ENCODE measurements at regions of chr2 and their contacts with region 1.

Region 1: GRCh38 chr2:54570925-54571694 is 115.0 kb downstream of the SPTBN1 start:
- DNase-seq: peak; percentile 84
- H3K4me3 Mint-ChIP-seq: peak overlapping the region; percentile 70
- H3K27ac Mint-ChIP-seq: peak overlapping the region; percentile 92
- H3K4me1 Mint-ChIP-seq: peaks cover 91% of the 10 kb centered on the region
- H3K27me3 Mint-ChIP-seq: peaks cover 2% of the 10 kb centered on the region

Region 2: GRCh38 chr2:53970724-53971602 is 600.1 kb before region 1 on chr2 and contains the start of gene PSME4:
- intact Hi-C with region 1: loop called (anchors 10 kb)
- DNase-seq: peak; percentile 91
- H3K4me3 Mint-ChIP-seq: peak within 1 kb of the TSS; percentile 99
- H3K27ac Mint-ChIP-seq: peak within 1 kb of the TSS; percentile 99
- H3K4me1 Mint-ChIP-seq: peaks cover 39% of the 10 kb centered on the region
- H3K27me3 Mint-ChIP-seq: no peaks in the 10 kb centered on the region
- total RNA-seq, gene PSME4: 59.3 and 59.7 TPM in 2 replicates

Region 3: GRCh38 chr2:54482715-54483114 is 88.4 kb before region 1 on chr2:
- intact Hi-C with region 1: no loop called
- DNase-seq: no peak
- H3K4me3 Mint-ChIP-seq: no peak overlapping the region
- H3K27ac Mint-ChIP-seq: no peak overlapping the region
- H3K4me1 Mint-ChIP-seq: no peaks in the 10 kb centered on the region
- H3K27me3 Mint-ChIP-seq: peaks cover 12% of the 10 kb centered on the region

Region 4: GRCh38 chr2:54522624-54523281 is 48.4 kb before region 1 on chr2:
- intact Hi-C with region 1: loop called (anchors 1 kb)
- DNase-seq: peak; percentile 49
- H3K4me3 Mint-ChIP-seq: no peak overlapping the region
- H3K27ac Mint-ChIP-seq: no peak overlapping the region
- H3K4me1 Mint-ChIP-seq: peaks cover 26% of the 10 kb centered on the region
- H3K27me3 Mint-ChIP-seq: peaks cover 24% of the 10 kb centered on the region

Region 5: DNA sequence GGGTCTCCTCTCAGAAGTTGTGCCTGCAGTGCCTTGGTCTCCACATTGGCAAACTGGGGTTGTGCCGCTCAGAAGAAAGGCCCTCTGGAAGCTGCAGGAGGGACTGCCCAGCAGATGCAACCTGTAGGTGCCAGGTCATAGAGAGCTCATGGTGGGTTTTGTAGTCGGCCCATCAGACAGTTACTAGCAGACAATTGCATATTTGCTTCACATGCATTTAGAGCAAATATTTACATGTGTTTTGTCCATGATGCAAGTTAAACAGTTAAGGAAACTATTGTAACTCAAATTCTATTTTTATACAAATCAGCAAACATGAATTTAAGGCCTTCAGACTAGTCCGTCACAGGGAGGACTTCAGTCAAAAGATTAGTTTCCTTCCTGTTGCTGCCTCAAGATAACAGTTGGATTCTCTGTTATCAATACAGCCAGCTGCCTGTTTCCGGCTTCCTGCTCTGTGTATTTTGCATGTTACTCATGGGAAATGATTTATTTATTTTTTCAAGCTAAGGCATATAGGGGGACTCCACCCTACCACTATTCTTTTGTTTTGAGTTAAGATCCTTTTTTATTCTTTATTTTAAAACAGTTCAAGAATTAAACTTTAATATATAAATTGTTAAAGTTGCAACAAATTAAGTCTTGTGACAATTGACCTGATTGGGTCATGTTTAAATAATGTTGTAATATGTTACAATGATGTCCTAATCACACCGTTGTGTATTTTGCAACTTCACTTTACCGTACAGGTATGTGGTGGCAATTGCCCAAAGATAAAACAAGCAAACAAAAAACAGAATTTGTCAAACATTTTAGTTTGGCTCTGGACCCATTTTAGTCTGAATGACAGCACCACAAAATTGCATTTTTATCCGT is 18.5 kb after region 1 on chr2:
- intact Hi-C with region 1: loop called (anchors 1 kb)
- DNase-seq: no peak
- H3K4me3 Mint-ChIP-seq: peak overlapping the region; percentile 70
- H3K27ac Mint-ChIP-seq: peak overlapping the region; percentile 88
- H3K4me1 Mint-ChIP-seq: peaks cover 79% of the 10 kb centered on the region
- H3K27me3 Mint-ChIP-seq: no peaks in the 10 kb centered on the region

Region 6: GRCh38 chr2:54606393-54606969 is 35.4 kb after region 1 on chr2:
- intact Hi-C with region 1: loop called (anchors 1 kb)
- DNase-seq: no peak
- H3K4me3 Mint-ChIP-seq: peak overlapping the region; percentile 61
- H3K27ac Mint-ChIP-seq: peak overlapping the region; percentile 85
- H3K4me1 Mint-ChIP-seq: peaks cover 83% of the 10 kb centered on the region
- H3K27me3 Mint-ChIP-seq: no peaks in the 10 kb centered on the region

Region 7: GRCh38 chr2:55213822-55214221 is 642.7 kb after region 1 on chr2:
- intact Hi-C with region 1: no loop called
- DNase-seq: no peak
- H3K4me3 Mint-ChIP-seq: no peak overlapping the region
- H3K27ac Mint-ChIP-seq: no peak overlapping the region
- H3K4me1 Mint-ChIP-seq: peaks cover 6% of the 10 kb centered on the region
- H3K27me3 Mint-ChIP-seq: no peaks in the 10 kb centered on the region

Region 8: GRCh38 chr2:55232084-55232862 is 661.2 kb after region 1 on chr2 and contains the starts of genes CLHC1 and RPS27A:
- intact Hi-C with region 1: loop called (anchors 5 kb)
- DNase-seq: peak; percentile 89
- H3K4me3 Mint-ChIP-seq: peak within 1 kb of the TSS; percentile 100
- H3K27ac Mint-ChIP-seq: peak within 1 kb of the TSS; percentile 97
- H3K4me1 Mint-ChIP-seq: peaks cover 63% of the 10 kb centered on the region
- H3K27me3 Mint-ChIP-seq: no peaks in the 10 kb centered on the region
- total RNA-seq, gene CLHC1: 9.0 and 12.3 TPM in 2 replicates
- total RNA-seq, gene RPS27A: 949 and 953 TPM in 2 replicates